ENCODE measurements at regions of chr6 and their contacts with region 1.

Region 1: DNA sequence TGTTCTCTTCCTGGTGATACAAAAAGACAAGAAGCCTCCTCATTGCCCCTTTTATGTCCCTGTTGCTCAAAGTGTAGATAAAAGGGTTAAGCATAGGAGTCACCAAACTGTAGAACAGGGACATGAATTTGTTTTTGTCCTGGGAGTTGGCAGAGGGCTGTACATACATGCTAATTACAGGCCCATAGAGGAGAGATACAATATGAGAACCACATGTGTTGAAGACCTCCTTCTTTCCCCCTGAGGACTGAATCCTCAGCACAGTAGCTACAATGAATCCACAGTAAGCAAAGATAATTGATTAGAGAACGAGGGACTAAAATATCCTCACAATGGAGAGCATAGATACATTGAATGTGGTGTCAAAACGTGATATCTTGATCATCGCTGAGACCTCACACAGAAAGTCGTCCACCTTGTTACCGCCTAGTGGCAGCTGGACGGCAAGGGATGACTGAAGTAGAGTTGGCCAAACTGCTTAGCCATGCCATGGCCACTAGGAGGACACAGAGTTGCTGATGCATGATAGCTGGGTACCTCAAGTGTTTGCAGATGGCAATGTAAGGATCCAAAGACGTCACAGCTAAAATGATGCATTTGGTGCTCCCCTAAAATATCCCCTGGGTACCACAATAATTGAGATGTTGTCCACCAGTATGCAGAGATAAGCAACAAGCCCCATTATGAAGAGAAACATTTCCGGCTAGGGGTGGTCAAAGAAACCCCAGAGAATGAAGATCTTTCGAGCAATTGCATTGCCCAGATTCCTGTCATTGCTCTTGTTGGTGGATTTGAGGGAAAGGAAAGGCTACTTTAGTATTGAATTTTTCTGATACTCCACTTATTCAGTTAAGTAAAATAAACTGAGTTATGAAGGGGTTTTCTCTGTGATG is 15.0 kb downstream of the OR2B3 start:
- DNase-seq: peak; percentile 58 to 60
- H3K4me3 ChIP-seq: no peak overlapping the region
- H3K4me3 Mint-ChIP-seq: no peak overlapping the region
- H3K27ac Mint-ChIP-seq: no peak overlapping the region
- H3K4me1 ChIP-seq: peaks cover 8% of the 10 kb centered on the region; the same call in 1 of the 2 replicates
- H3K4me1 Mint-ChIP-seq: peaks cover 9% of the 10 kb centered on the region
- H3K27me3 ChIP-seq: no peaks in the 10 kb centered on the region
- H3K27me3 Mint-ChIP-seq: no peaks in the 10 kb centered on the region
- CTCF ChIP-seq: peak; percentile 74 to 87

Region 2: GRCh38 chr6:29051680-29052079 is 20.4 kb before region 1 on chr6:
- CTCF ChIA-PET with region 1: no interaction called
- POLR2A ChIA-PET with region 1: no interaction called
- intact Hi-C with region 1: no loop called
- DNase-seq: no peak
- H3K4me3 ChIP-seq: no peak overlapping the region
- H3K4me3 Mint-ChIP-seq: no peak overlapping the region
- H3K27ac Mint-ChIP-seq: no peak overlapping the region
- H3K4me1 ChIP-seq: no peaks in the 10 kb centered on the region
- H3K4me1 Mint-ChIP-seq: no peaks in the 10 kb centered on the region
- H3K27me3 ChIP-seq: no peaks in the 10 kb centered on the region
- H3K27me3 Mint-ChIP-seq: peaks cover 18% of the 10 kb centered on the region
- CTCF ChIP-seq: no peak

Region 3: GRCh38 chr6:29112119-29112518 is 40.0 kb after region 1 on chr6:
- CTCF ChIA-PET with region 1: no interaction called
- POLR2A ChIA-PET with region 1: no interaction called
- intact Hi-C with region 1: loop called (anchors 1 kb)
- DNase-seq: peak in 1 of 2 experiments; percentile 13
- H3K4me3 ChIP-seq: no peak overlapping the region
- H3K4me3 Mint-ChIP-seq: no peak overlapping the region
- H3K27ac Mint-ChIP-seq: no peak overlapping the region
- H3K4me1 ChIP-seq: no peaks in the 10 kb centered on the region
- H3K4me1 Mint-ChIP-seq: no peaks in the 10 kb centered on the region
- H3K27me3 ChIP-seq: no peaks in the 10 kb centered on the region
- H3K27me3 Mint-ChIP-seq: peaks cover 3% of the 10 kb centered on the region
- CTCF ChIP-seq: peak in 1 of 2 experiments; percentile 16

Region 4: GRCh38 chr6:29227235-29227634 is 155.2 kb after region 1 on chr6:
- CTCF ChIA-PET with region 1: interaction called, 3 read pairs
- POLR2A ChIA-PET with region 1: no interaction called
- intact Hi-C with region 1: loop called (anchors 1 kb)
- DNase-seq: no peak
- H3K4me3 ChIP-seq: no peak overlapping the region
- H3K4me3 Mint-ChIP-seq: no peak overlapping the region
- H3K27ac Mint-ChIP-seq: no peak overlapping the region
- H3K4me1 ChIP-seq: no peaks in the 10 kb centered on the region
- H3K4me1 Mint-ChIP-seq: no peaks in the 10 kb centered on the region
- H3K27me3 ChIP-seq: no peaks in the 10 kb centered on the region; the same call in 1 of the 2 replicates
- H3K27me3 Mint-ChIP-seq: peaks cover 21% of the 10 kb centered on the region
- CTCF ChIP-seq: no peak

Measured in Caco-2 (cell line).